ENCODE measurements at regions of chr15 and their contacts with region 1.

Region 1: DNA sequence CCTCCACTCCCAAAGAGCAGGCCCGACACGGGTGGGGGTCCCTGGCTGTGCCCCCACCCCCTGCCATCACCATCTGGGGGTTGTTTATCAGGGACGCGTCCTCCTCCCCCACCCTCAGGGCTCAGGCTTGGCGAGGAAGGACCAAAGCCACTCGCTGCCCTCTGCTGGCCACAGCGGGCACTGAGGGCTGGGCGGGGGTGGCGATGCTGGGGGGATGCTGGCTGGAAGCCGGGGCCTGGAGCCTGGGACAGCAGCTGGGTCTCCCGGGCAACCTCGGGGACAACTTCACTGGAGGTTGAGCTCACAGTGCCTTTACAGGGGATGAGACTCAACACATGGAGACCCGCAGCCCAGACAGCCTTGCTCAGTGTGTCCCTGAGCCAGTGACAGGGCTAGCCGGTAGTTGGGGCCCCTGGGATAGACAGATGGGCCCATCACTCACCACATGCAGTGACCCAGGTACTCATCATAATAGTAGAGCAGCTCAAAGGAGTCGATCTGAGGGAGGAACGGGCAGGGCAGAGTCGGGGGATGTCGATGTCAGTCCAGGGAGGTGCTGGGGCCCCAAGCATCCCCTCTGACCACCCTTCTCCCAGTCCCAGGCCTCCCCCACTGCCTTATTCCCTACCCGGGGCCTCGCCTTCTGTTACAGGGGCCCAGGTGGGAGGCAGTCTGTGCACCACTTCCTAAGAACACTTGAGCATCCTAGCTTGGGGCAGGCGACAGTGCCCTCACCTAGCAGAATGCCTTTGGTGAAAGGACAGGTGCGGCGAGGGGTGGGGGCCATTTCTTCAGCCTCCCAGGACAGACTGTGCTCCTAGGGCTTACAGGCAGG is 5.9 kb upstream of the CALML4 start:
- DNase-seq: no peak
- H3K4me3 ChIP-seq: peak overlapping the region; percentile 24
- H3K27me3 ChIP-seq: no peaks in the 10 kb centered on the region
- CTCF ChIP-seq: peak; percentile 99

Region 2: DNA sequence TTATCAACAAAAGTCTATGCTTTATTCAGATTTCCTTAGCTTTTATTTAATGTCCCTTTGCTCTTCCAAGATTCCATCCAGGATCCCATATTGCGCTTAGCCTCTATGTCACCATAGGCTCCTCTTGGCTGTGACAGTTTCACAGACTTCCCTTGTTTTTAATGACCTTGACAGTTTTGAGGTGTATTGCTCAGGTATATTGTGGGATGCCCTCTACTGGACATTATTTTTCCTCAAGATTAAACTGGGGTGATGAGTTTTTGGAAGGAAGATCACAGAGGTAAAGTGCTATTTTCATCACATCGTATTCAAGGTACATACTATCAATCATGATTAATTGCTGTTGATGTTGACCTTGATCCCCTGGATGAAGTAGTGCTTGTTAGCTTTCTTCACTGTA is 1244.8 kb before region 1 on chr15:
- CTCF ChIA-PET with region 1: no interaction called
- POLR2A ChIA-PET with region 1: no interaction called
- DNase-seq: no peak
- H3K4me3 ChIP-seq: no peak overlapping the region
- H3K27me3 ChIP-seq: peaks cover 2% of the 10 kb centered on the region
- CTCF ChIP-seq: 0 out of 2 replicates have a peak, but pooled peaks have one; percentile 13

Region 3: DNA sequence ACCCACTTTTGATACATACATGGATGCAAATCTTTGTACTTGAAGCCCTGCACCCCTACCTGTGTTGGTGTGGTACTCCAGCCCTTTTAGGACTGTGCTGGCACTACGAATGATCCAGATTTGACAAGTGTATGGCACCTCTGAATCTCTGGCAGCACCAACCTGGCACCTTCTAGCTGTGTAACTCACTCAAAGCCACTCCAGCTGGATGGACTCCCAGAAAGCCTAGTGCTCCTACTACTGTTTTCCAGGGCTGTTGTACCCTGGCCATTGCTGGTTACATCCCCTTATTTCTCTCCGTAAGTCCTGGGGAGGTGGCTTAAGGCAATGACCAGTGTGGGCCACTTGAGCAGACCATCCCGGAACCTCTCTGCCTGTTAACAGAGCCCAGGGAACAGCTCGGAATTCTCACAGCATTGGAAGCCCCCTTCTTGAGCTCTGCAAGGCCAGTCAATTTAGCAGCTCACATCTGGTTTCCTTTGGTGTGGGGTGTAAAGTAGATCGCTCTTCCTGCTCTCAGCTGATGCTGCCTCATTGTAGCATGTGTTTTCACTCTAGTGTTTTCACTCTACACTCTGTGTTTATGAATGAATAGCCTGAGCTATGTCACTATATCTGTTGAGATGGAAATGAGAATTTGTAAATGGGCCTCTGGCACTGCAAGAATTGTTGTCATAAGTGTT is 18.1 kb before region 1 on chr15:
- CTCF ChIA-PET with region 1: interaction called, 14 read pairs
- POLR2A ChIA-PET with region 1: no interaction called
- DNase-seq: no peak
- H3K4me3 ChIP-seq: no peak overlapping the region
- H3K27me3 ChIP-seq: no peaks in the 10 kb centered on the region
- CTCF ChIP-seq: no peak

Region 4: DNA sequence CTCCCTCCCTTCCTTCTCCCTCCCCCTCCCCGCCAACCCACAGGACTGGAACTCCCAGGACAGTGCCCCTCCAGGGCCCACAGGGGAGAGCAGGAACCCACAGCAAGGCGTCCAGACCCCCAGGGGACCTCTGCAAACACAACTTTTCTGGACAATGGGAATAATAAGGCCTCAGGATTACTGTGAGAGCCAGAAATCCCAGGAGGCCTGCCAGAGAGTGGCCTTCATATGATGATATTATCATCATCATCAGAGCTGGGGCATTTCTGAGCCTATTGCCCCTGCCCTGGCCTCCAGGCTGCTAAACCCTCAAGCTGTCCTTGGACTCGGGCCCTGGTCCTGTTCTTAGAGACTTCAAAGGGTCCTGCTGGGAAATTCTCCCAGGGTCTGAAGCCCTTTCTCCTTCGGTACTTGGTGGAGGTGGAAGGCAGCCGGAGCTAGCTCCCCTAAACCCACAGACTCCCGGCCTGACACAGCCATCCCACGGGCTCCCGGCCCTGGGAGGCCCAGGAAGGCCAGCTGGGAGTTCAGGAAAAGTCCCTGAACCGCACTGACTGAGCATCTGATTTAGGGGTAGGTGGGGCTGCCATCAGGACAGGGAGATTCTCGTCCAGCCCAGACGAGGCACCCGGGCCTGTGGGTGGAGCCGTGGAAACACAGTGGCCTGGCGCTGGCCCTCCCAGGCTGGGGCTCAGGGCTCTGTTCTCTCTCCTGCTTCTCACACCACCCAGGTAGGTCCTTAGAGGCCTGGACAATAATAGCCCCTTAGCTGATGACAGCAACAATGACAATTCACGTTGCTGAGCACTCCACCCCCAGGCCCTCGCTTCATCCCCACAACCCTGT is 10.8 kb before region 1 on chr15:
- CTCF ChIA-PET with region 1: interaction called, 16 read pairs
- POLR2A ChIA-PET with region 1: no interaction called
- DNase-seq: no peak
- H3K4me3 ChIP-seq: no peak overlapping the region
- H3K27me3 ChIP-seq: no peaks in the 10 kb centered on the region
- CTCF ChIP-seq: no peak

Region 5: DNA sequence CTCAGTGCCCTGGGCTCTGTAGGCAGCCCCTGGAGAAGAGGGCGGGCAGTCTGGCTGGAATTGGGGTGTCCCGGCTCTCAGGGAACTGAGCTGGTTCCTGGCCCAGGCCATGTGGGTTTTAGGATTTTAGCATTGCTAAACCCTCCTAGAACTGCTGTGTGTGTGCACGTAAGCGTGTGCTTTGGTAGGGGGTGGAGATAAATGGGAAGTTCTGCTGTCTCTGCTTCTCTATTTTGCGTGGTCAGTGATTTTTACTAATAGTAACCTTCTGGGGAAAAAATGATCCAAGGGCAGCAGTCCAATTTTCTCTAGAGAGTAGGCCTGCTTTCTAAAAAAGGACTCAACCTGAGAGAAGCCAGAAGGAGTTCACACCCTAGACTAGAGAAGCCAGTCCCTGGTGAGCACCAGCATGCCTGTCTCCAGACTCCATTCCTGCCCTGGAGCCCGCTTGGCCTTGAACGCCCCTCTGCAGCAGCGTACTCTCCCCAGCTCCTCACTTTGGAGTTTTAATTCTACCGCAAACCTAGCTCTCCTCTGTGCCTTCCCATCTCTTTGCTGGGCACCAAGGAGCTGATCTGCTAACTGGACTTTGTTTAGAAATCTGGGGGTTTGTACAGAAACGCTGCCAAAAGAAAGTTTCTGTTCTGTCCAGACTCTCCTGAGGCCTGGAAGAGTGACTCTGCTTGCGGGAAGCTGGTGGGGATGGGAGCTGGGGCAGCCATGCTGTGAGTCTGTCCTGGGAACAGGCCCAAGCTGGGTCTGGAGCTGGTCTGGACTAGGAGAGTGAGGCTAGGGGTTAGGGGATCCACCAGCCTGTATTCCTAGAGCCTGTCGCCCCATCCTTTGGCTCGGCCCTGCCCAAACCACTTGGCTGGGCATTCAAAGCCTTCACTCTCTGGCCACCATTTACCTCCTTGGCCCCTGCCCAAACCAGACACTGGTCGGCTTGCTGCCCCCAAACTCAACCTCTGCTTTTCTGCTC is 387.4 kb after region 1 on chr15:
- CTCF ChIA-PET with region 1: no interaction called
- POLR2A ChIA-PET with region 1: no interaction called
- DNase-seq: peak; percentile 23
- H3K4me3 ChIP-seq: no peak overlapping the region
- H3K27me3 ChIP-seq: no peaks in the 10 kb centered on the region
- CTCF ChIP-seq: no peak